ENCODE measurements at regions of chr13 and their contacts with region 1.

Region 1: GRCh38 chr13:54536112-54536511 is 1507.5 kb downstream of the OLFM4 start:
- DNase-seq: no peak
- H3K4me3 ChIP-seq: no peak overlapping the region
- H3K27ac ChIP-seq: no peak overlapping the region
- H3K4me1 ChIP-seq: no peaks in the 10 kb centered on the region
- H3K27me3 ChIP-seq: no peaks in the 10 kb centered on the region
- CTCF ChIP-seq: peak; percentile 54

Region 2: GRCh38 chr13:53520132-53520531 is 1016.0 kb before region 1 on chr13:
- CTCF ChIA-PET with region 1: no interaction called
- POLR2A ChIA-PET with region 1: no interaction called
- intact Hi-C with region 1: no loop called
- DNase-seq: no peak
- H3K4me3 ChIP-seq: no peak overlapping the region
- H3K27ac ChIP-seq: no peak overlapping the region
- H3K4me1 ChIP-seq: no peaks in the 10 kb centered on the region
- H3K27me3 ChIP-seq: no peaks in the 10 kb centered on the region
- CTCF ChIP-seq: no peak

Region 3: GRCh38 chr13:54185785-54186184 is 350.3 kb before region 1 on chr13:
- CTCF ChIA-PET with region 1: no interaction called
- POLR2A ChIA-PET with region 1: no interaction called
- intact Hi-C with region 1: loop called (anchors 5 kb)
- DNase-seq: peak; percentile 13 to 35
- H3K4me3 ChIP-seq: no peak overlapping the region
- H3K27ac ChIP-seq: no peak overlapping the region
- H3K4me1 ChIP-seq: peaks cover 10% of the 10 kb centered on the region; the same call in 1 of the 2 replicates
- H3K27me3 ChIP-seq: no peaks in the 10 kb centered on the region
- CTCF ChIP-seq: peak; percentile 73

Measured in PC-9 (cell line).